ENCODE measurements at regions of chr5 and their contacts with region 1.

Region 1: GRCh38 chr5:32232441-32233219 is 58.5 kb upstream of the GOLPH3 start:
- DNase-seq: peak; percentile 75 to 88 (median 82)
- H3K4me3 ChIP-seq: no peak overlapping the region
- H3K27ac ChIP-seq: peak overlapping the region in 57 of 59 donors; percentile 17 to 89 (median 64)
- H3K27me3 ChIP-seq: no peaks in the 10 kb centered on the region
- CTCF ChIP-seq: peak; percentile 71 to 97 (median 90)

Region 2: GRCh38 chr5:32174011-32174870 is 58.4 kb before region 1 on chr5 and contains the start of gene GOLPH3:
- intact Hi-C with region 1: loop called in 1 of 2 experiments (anchors 10 kb)
- DNase-seq: peak; percentile 83 to 94 (median 90)
- H3K4me3 ChIP-seq: peak within 1 kb of the TSS; percentile 64 to 99 (median 94)
- H3K27ac ChIP-seq: peak within 1 kb of the TSS; percentile 93 to 100 (median 99)
- H3K27me3 ChIP-seq: no peaks in the 10 kb centered on the region
- CTCF ChIP-seq: peak in 29 of 56 donors; percentile 7 to 48 (median 25)
- total RNA-seq, gene GOLPH3: 44.5 to 71.5 (median 53.5) TPM

Region 3: DNA sequence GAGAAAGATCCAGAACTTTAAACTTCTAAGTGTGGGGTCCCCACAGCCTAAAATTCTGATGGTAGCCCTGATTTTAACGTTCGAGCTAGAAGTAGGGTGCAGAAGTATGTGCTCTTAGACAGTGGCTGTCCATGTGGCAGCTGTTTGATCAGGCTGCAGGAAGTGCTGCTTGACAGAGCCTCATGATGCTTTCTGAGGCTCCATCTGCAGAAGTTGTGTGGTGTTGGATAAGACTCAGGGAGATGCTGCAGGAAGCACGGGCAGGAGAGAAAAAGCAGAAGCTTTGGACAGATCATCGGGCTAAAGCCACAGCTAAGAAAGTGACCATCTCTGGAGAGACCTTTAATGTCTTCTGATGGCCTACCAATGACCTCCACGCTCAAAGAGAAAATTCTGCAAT is 72.0 kb after region 1 on chr5:
- intact Hi-C with region 1: no loop called
- DNase-seq: no peak
- H3K4me3 ChIP-seq: no peak overlapping the region
- H3K27ac ChIP-seq: peak overlapping the region in 2 of 59 donors; percentile 7 to 14
- H3K27me3 ChIP-seq: no peaks in the 10 kb centered on the region
- CTCF ChIP-seq: no peak

Region 4: GRCh38 chr5:32329308-32329834 is 96.7 kb after region 1 on chr5:
- intact Hi-C with region 1: loop called (anchors 2 to 5 kb)
- DNase-seq: peak in 9 of 10 donors; percentile 44 to 82 (median 69)
- H3K4me3 ChIP-seq: no peak overlapping the region
- H3K27ac ChIP-seq: no peak overlapping the region
- H3K27me3 ChIP-seq: no peaks in the 10 kb centered on the region
- CTCF ChIP-seq: peak; percentile 32 to 77 (median 63)

Region 5: DNA sequence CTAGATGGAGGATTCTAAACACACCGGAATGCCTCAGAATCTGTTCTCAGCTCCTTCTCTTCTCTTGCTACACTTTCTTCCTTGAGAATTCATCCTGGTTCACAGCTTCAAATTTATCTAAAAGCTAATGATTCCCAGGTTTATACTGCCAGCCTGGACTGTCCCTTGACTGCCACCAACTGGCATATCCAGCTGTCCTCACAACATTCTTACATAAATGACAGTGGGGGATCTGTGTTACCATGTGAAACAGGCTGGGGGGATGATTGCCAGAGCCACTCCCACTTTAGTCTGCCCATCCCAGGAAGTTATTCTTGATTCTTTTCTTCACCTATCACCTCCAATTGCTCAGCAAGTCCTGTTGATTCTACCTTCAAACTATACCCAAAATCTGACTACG is 239.2 kb after region 1 on chr5:
- intact Hi-C with region 1: loop called (anchors 5 to 10 kb)
- DNase-seq: peak in 1 of 10 donors; percentile 27
- H3K4me3 ChIP-seq: no peak overlapping the region
- H3K27ac ChIP-seq: no peak overlapping the region
- H3K27me3 ChIP-seq: no peaks in the 10 kb centered on the region
- CTCF ChIP-seq: peak in 42 of 56 donors; percentile 11 to 57 (median 29)

Region 6: DNA sequence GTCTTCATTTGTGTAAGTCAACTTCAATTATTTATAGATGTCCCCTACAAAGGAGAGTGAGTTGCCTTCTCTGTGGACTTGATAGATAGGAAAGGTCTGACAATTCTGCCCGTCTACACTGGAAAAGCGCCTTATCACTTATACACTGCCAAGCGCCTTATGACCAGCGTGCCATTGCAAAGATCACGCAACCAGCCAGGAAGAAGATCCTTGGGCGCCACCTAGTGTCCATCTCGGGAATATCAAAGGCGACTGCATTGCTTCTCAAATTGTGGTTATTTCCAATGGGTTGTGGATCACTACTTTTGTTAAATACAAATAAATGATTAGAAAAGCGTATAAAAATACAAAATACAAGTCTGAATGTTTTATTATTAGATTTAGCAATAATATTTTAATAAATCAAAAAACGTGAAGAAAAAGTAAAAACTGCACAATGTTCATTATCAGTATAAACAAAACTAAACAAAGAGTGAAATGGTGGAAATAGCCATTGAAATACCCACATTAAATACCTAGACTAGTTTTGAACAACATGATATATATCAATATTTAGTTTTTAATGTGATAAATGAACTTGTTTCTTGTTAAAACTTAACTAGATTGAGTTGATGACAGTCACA is 380.5 kb after region 1 on chr5:
- intact Hi-C with region 1: loop called (anchors 2 to 10 kb)
- DNase-seq: peak; percentile 74 to 94 (median 84)
- H3K4me3 ChIP-seq: peak overlapping the region in 12 of 59 donors; percentile 1 to 31 (median 7)
- H3K27ac ChIP-seq: no peak overlapping the region
- H3K27me3 ChIP-seq: no peaks in the 10 kb centered on the region
- CTCF ChIP-seq: peak; percentile 76 to 98 (median 94)